BJ (cell line): ENCODE measurements at regions of chr11 and their contacts with region 1.

Region 1: GRCh38 chr11:7851391-7851790 is 54.6 kb upstream of the OR5P2 start:
- DNase-seq: no peak
- H3K4me3 ChIP-seq: no peak overlapping the region
- H3K27me3 ChIP-seq: no peaks in the 10 kb centered on the region
- CTCF ChIP-seq: 0 out of 2 replicates have a peak, but pooled peaks have one; percentile 8

Region 2: DNA sequence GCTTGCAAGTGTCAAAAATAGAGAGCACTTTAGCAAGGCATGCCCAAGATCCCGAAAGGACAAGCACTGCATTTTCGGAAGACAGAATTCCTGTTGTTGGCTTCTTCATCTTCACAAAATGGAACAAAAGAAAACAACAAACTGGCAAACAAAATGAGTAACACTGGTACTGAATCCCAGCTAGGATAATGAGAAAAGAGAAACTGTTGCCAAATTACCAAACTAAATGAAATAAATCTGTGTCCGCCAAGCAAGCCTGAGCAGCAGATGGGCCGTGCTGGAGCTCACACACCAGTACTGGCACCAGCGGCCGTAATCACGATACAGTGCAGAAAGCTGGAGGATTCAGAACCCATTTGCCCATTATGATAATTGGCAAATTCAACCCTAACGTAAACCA is 260.2 kb after region 1 on chr11:
- CTCF ChIA-PET with region 1: no interaction called
- POLR2A ChIA-PET with region 1: interaction called, 18 read pairs
- DNase-seq: no peak
- H3K4me3 ChIP-seq: no peak overlapping the region
- H3K27me3 ChIP-seq: peaks cover 6% of the 10 kb centered on the region; the same call in 1 of the 2 replicates
- CTCF ChIP-seq: no peak